ENCODE measurements at regions of chr7 and their contacts with region 1.

Region 1: GRCh38 chr7:44072364-44073231 is 7.2 kb upstream of the PGAM2 start:
- DNase-seq: peak; percentile 65 to 87
- H3K4me3 ChIP-seq: peak overlapping the region in 1 of 4 donors; percentile 12
- H3K27ac ChIP-seq: peak overlapping the region in 4 of 5 donors; percentile 75 to 87 (median 81)
- H3K4me1 ChIP-seq: peaks cover 31 to 71% (median 53%) of the 10 kb centered on the region in 4 donors
- H3K27me3 ChIP-seq: no peaks in the 10 kb centered on the region
- CTCF ChIP-seq: peak in 5 of 7 experiments; percentile 27 to 58 (median 32)
- EP300 ChIP-seq: no peak
- POLR2A ChIP-seq: no peak

Region 2: DNA sequence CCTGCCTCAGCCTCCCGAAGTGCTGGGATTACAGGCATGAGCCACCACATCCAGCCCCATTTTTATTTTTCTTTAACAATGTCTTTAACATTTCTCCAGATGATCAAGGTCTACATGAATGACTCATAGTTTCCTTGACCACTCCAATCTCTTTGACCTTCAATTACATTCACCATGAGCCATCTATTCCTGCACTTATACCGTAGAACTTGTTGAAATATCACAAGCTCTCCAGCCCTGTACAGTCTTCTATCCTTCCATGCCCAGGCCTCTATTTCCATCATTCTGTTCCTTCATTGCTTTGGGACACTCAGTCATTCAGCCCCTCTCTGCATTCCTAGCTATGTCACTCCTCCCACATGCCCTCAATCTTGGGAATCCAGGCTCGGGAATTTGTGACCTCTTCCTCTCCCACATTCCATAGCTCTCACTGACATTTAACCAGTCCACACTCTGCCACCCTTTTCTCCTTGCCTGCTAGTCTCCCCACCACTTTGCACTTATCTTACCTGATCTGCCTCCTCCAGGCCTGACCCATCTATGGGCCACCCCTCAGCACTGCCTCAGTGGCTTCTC is 641.5 kb before region 1 on chr7:
- intact Hi-C with region 1: no loop called
- DNase-seq: no peak
- H3K4me3 ChIP-seq: no peak overlapping the region
- H3K27ac ChIP-seq: no peak overlapping the region
- H3K4me1 ChIP-seq: no peaks in the 10 kb centered on the region
- H3K27me3 ChIP-seq: no peaks in the 10 kb centered on the region
- CTCF ChIP-seq: no peak
- EP300 ChIP-seq: no peak
- POLR2A ChIP-seq: no peak

Region 3: DNA sequence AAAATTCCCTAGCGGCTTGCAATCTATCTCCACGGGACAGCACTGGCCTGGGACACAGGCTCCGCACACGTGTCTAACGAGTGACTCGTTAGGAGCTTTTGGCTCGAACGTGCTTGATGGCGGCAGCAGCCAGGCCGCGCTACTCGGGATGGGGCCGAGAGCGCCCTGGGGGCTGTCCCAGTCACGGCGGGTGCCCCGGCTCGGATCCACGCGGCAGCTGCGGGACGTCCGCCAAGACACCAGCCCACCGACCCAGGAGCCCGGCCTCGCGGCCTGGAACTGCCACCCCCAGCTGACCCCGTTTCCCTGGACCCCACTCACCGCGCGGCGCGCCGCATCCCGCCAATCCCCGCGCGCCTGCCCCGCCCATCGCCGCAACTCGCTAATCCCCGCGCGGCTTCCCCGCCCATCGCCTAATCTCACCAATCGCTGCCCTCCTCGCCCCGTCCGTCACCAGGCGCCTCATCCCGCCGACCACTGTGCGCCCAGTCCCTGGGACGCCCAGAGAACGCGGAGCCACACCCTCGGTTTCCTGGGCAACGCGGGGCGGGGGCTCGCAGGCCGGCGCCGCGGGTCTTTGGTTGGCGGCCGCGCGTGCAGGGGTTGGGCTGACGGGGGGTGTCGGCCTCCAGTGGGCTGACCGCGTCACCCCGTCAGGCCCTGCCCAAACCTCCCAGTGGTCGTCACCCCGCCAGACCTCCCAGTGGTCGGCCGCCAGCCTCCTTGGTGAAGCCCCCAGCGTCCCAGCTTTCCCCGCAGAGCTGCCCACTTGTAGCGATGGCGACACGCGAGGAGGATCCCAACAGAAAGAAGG is 50.8 kb after region 1 on chr7 and contains the start of gene POLD2:
- intact Hi-C with region 1: loop called (anchors 10 kb)
- DNase-seq: peak; percentile 97 to 99
- H3K4me3 ChIP-seq: peak within 1 kb of the TSS; percentile 59 to 91 (median 82)
- H3K27ac ChIP-seq: peak within 1 kb of the TSS; percentile 82 to 94 (median 93)
- H3K4me1 ChIP-seq: peaks cover 6 to 45% (median 35%) of the 10 kb centered on the region in 4 donors
- H3K27me3 ChIP-seq: no peaks in the 10 kb centered on the region
- CTCF ChIP-seq: no peak
- EP300 ChIP-seq: no peak
- POLR2A ChIP-seq: no peak
- total RNA-seq, gene POLD2: 19.8 to 91.2 (median 34.3) TPM

Region 4: DNA sequence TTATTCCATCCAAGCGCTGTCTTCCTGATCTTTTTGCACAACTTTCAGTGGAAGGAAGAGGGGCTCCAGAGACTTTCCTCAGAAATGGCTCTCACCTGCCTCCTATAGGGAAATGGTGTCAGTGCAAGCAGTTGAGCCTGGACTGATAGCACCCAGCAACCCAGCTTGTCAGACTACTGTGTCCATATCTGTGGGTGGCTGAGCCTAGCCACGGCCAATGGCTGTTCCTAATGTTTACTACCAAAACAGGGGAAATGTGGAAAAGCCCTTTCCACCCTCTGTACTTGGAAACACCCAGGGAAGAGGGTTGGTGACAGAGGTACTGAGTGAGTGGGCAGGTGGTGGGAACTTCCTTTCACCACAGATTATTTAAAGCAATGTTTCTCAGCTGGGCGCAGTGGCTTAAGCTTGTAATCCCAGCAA is 123.9 kb after region 1 on chr7:
- intact Hi-C with region 1: loop called (anchors 10 kb)
- DNase-seq: peak in 1 of 2 donors; percentile 78
- H3K4me3 ChIP-seq: no peak overlapping the region
- H3K27ac ChIP-seq: no peak overlapping the region
- H3K4me1 ChIP-seq: peaks cover 0 to 2% (median 1%) of the 10 kb centered on the region in 4 donors
- H3K27me3 ChIP-seq: peaks cover 0 to 32% (median 0%) of the 10 kb centered on the region in 3 donors
- CTCF ChIP-seq: peak in 5 of 7 experiments; percentile 17 to 59 (median 49)
- EP300 ChIP-seq: no peak
- POLR2A ChIP-seq: no peak